ENCODE measurements at regions of chr16 and their contacts with region 1.

Region 1: DNA sequence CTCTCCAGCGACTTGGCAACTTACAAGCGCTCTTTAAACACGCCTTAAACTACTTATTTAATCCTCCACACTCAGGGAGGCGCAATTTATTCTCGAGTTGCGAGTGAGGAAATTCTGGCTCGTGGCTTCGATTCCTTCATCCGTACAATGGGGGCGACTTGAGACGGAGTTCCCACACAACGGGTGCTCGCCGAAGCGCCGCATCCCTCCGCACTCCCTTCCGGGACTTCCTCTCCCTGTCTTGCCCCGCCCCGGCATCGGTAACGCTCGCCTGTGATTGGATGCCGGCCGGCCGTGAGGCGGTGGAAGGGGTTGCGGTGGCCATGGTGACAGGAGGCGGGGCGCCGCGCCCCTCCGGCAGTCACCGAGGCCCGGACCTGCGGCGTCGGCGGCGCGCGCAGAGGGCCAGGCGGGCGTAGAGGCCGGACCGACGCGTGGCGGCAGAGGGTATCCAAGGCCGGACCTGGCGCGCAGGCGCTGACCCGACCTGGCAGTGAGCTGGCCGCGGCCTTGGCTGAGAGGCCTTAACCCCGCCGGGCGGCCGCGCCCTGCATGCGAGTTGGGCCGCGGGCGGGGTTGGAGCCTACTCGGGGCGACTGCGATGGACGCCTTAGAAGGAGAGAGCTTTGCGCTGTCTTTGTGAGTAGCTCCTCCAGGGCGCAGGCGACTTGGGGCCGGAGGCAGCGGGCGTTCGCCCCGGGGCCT is at the start of gene ARL2BP:
- DNase-seq: peak; percentile 98
- H3K4me3 Mint-ChIP-seq: peak within 1 kb of the TSS; percentile 88
- H3K27ac Mint-ChIP-seq: peak within 1 kb of the TSS; percentile 97
- H3K4me1 Mint-ChIP-seq: peaks cover 14% of the 10 kb centered on the region
- H3K27me3 Mint-ChIP-seq: no peaks in the 10 kb centered on the region
- total RNA-seq, gene ARL2BP: 28.1 and 31.2 TPM in 2 replicates

Region 2: DNA sequence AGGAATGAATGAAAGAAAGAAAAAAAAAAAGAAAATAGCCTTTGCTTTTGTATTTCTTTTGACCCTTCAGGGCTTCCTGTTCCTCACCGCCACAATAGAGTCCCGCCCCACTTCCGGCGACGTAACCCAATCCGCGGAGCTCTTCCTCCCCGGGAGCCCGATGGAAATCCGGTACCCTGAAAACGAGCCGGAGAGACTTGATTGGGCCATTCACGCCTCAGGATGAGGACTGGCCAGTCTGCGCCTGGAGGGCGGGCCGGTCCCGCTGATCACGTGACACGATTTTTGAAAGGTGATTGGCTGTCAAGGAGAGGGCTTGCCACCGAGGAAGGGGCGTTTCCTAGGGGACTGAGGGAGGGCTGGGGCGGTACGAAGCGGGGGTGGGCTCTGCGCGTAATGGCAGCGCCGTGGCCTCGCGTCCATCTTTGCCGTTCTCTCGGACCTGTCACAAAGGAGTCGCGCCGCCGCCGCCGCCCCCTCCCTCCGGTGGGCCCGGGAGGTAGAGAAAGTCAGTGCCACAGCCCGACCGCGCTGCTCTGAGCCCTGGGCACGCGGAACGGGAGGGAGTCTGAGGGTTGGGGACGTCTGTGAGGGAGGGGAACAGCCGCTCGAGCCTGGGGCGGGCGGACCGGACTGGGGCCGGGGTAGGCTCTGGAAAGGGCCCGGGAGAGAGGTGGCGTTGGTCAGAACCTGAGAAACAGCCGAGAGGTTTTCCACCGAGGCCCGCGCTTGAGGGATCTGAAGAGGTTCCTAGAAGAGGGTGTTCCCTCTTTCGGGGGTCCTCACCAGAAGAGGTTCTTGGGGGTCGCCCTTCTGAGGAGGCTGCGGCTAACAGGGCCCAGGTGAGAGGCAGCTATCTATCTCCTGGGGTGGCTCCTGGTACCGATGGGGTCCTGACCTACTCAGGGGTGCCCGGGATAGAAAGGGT is 58.7 kb before region 1 on chr16 and contains the starts of genes PSME3IP1 and RSPRY1:
- intact Hi-C with region 1: loop called (anchors 2 kb)
- DNase-seq: peak; percentile 99
- H3K4me3 Mint-ChIP-seq: peak within 1 kb of the TSS; percentile 98
- H3K27ac Mint-ChIP-seq: peak within 1 kb of the TSS; percentile 96
- H3K4me1 Mint-ChIP-seq: peaks cover 36% of the 10 kb centered on the region
- H3K27me3 Mint-ChIP-seq: no peaks in the 10 kb centered on the region
- total RNA-seq, gene PSME3IP1: 109 and 125 TPM in 2 replicates
- total RNA-seq, gene RSPRY1: 33.3 and 43.0 TPM in 2 replicates

Region 3: DNA sequence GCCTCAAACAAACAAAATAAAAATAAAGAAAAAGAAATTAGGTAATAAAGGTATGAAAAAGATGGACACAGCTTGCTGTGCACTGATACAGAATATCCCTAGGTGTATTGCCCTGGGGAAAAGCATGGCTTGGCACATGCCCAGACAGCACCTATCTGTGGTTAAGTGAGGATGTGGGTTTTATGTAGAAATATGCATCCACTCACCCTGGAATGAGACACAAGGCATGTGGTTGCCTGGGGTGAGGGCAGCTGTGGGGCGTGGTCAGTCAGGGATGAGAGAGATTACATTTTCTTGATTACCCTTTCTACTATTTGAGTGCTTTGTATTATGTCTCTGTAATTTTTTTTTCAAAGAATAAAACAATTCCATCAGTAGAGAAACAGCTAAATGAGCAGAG is 32.7 kb after region 1 on chr16:
- intact Hi-C with region 1: loop called (anchors 5 kb)
- DNase-seq: peak; percentile 63
- H3K4me3 Mint-ChIP-seq: no peak overlapping the region
- H3K27ac Mint-ChIP-seq: peak overlapping the region; percentile 46
- H3K4me1 Mint-ChIP-seq: peaks cover 35% of the 10 kb centered on the region
- H3K27me3 Mint-ChIP-seq: peaks cover 7% of the 10 kb centered on the region

Region 4: DNA sequence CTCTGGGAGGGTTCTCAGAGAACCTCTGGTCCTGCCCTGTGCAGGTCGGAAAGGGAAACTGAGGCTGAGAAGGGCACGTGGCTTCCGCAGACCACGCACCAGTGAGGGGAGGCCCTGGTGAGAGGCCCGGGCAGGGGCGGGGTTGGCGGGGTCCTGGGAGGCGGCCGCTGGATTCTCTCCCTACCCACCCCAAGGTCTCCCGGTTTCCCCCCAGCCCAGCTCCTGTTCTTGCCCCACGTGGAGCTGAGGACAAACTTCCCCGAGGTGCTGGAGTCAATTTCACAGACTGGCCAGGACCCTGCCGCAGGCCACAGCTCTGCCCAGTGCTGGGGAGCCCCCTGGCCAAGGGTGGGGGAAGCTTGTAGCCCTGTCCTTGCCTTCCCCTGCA is 171.2 kb after region 1 on chr16:
- intact Hi-C with region 1: loop called (anchors 5 kb)
- DNase-seq: no peak
- H3K4me3 Mint-ChIP-seq: no peak overlapping the region
- H3K27ac Mint-ChIP-seq: no peak overlapping the region
- H3K4me1 Mint-ChIP-seq: peaks cover 15% of the 10 kb centered on the region
- H3K27me3 Mint-ChIP-seq: no peaks in the 10 kb centered on the region